ENCODE measurements at regions of chr10 and their contacts with region 1.

Region 1: DNA sequence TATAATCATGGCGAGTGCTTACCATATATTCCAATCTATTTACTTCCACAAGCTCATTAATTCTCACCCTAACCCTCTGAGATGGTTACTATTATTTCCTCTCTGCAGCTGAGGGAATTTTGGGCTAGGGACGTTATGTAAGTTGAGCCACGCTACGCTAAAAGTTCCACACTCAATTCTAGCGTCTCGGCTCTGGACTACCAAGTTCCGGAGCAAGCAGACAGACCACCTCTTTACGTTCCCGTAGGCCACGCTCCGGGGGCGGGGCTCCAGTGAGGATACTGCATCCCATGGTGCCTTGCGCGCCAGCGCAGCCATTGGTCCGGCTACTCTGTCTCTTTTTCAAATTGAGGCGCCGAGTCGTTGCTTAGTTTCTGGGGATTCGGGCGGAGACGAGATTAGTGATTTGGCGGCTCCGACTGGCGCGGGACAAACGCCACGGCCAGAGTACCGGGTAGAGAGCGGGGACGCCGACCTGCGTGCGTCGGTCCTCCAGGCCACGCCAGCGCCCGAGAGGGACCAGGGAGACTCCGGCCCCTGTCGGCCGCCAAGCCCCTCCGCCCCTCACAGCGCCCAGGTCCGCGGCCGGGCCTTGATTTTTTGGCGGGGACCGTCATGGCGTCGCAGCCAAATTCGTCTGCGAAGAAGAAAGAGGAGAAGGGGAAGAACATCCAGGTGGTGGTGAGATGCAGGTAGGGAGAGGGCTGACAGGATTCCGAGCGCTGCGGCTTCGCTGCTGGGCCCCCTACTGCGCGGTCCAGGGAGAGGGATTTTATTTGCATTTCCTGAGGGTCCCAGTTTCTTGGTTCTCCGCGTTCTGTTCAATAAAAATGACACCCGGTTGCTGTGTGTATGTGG is at the start of gene KIF11:
- DNase-seq: peak; percentile 99
- H3K4me3 ChIP-seq: peak within 1 kb of the TSS; percentile 96
- H3K27ac ChIP-seq: peak within 1 kb of the TSS; percentile 93
- H3K4me1 ChIP-seq: peaks cover 40% of the 10 kb centered on the region
- CTCF ChIP-seq: peak; percentile 36; the same call in 1 of the 2 replicates
- total RNA-seq, gene KIF11: 71.8 and 72.7 TPM in 2 replicates

Region 2: GRCh38 chr10:92573798-92574547 is 19.0 kb before region 1 on chr10 and contains the start of gene IDE:
- CTCF ChIA-PET with region 1: no interaction called
- POLR2A ChIA-PET with region 1: interaction called, 32 read pairs
- intact Hi-C with region 1: loop called (anchors 2 kb)
- DNase-seq: peak; percentile 89
- H3K4me3 ChIP-seq: peak within 1 kb of the TSS; percentile 95
- H3K27ac ChIP-seq: peak within 1 kb of the TSS; percentile 68
- H3K4me1 ChIP-seq: peaks cover 29% of the 10 kb centered on the region
- CTCF ChIP-seq: peak; percentile 83
- total RNA-seq, gene IDE: 14.2 and 14.3 TPM in 2 replicates

Region 3: GRCh38 chr10:92742331-92743228 is 149.6 kb after region 1 on chr10:
- CTCF ChIA-PET with region 1: no interaction called
- POLR2A ChIA-PET with region 1: interaction called, 8 read pairs
- intact Hi-C with region 1: loop called (anchors 1 kb)
- DNase-seq: peak; percentile 95
- H3K4me3 ChIP-seq: peak overlapping the region; percentile 53
- H3K27ac ChIP-seq: peak overlapping the region; percentile 91
- H3K4me1 ChIP-seq: peaks cover 53% of the 10 kb centered on the region
- CTCF ChIP-seq: no peak

Region 4: DNA sequence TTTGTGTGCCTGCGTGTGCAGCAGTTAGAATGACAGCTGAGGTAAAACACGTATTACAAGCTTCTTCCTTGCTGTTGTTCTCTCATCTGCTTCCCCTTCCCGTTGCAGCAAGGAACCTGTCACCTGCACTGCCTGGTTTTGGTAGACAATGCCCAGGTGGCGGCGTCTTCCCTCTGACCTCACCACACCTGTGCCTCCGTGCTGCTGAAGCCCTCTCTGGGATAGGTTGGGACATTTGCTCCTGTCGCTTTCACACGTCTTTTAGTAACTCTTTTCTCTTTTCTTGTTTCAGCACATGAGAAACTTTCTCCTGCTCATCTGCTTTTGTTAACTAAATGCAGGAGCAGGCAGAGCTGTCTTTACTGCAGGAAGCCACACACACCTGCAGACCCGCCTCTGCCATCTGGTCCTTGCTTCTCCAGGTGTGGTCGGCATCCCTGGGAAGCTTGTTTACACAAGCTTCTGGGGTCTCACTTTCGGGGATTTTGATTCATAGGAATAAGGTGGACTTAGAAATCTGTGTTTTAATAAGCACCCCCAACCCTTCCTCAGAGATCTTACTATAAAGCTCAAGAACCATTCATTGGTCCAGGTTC is 194.7 kb after region 1 on chr10:
- CTCF ChIA-PET with region 1: no interaction called
- POLR2A ChIA-PET with region 1: interaction called, 3 read pairs
- intact Hi-C with region 1: loop called (anchors 1 kb)
- DNase-seq: peak; percentile 84
- H3K4me3 ChIP-seq: peak overlapping the region; percentile 13
- H3K27ac ChIP-seq: peak overlapping the region; percentile 66
- H3K4me1 ChIP-seq: peaks cover 49% of the 10 kb centered on the region
- CTCF ChIP-seq: peak; percentile 47; the same call in 1 of the 2 replicates

Region 5: GRCh38 chr10:92848441-92849233 is 255.6 kb after region 1 on chr10 and contains the start of gene EXOC6:
- CTCF ChIA-PET with region 1: no interaction called
- POLR2A ChIA-PET with region 1: interaction called, 6 read pairs
- intact Hi-C with region 1: loop called (anchors 2 kb)
- DNase-seq: peak; percentile 93
- H3K4me3 ChIP-seq: peak within 1 kb of the TSS; percentile 83
- H3K27ac ChIP-seq: peak within 1 kb of the TSS; percentile 56
- H3K4me1 ChIP-seq: peaks cover 18% of the 10 kb centered on the region
- CTCF ChIP-seq: 0 out of 2 replicates have a peak, but pooled peaks have one; percentile 32
- total RNA-seq, gene EXOC6: 8.0 and 9.6 TPM in 2 replicates

Region 6: GRCh38 chr10:92880233-92880861 is 287.4 kb after region 1 on chr10:
- CTCF ChIA-PET with region 1: no interaction called
- POLR2A ChIA-PET with region 1: interaction called, 4 read pairs
- intact Hi-C with region 1: loop called (anchors 1 kb)
- DNase-seq: peak; percentile 62
- H3K4me3 ChIP-seq: no peak overlapping the region
- H3K27ac ChIP-seq: no peak overlapping the region
- H3K4me1 ChIP-seq: no peaks in the 10 kb centered on the region
- CTCF ChIP-seq: peak; percentile 95

Measured in OCI-LY7 (cell line).